Adrenal gland (tissue), 19 donors: ENCODE measurements at regions of chr9 and their contacts with region 1.

Region 1: GRCh38 chr9:134371731-134372130 is 45.5 kb downstream of the RXRA start:
- DNase-seq: peak; percentile 65 to 89 (median 83)
- H3K4me3 ChIP-seq: no peak overlapping the region
- H3K27ac ChIP-seq: peak overlapping the region; percentile 84 to 99 (median 93)
- H3K4me1 ChIP-seq: peaks cover 89 to 92% of the 10 kb centered on the region in 2 donors
- H3K27me3 ChIP-seq: no peaks in the 10 kb centered on the region
- CTCF ChIP-seq: no peak
- POLR2A ChIP-seq: no peak

Region 2: GRCh38 chr9:134283111-134283515 is 88.6 kb before region 1 on chr9:
- intact Hi-C with region 1: no loop called
- DNase-seq: peak in 5 of 7 donors; percentile 36 to 62 (median 42)
- H3K4me3 ChIP-seq: no peak overlapping the region
- H3K27ac ChIP-seq: no peak overlapping the region
- H3K4me1 ChIP-seq: no peaks in the 10 kb centered on the region
- H3K27me3 ChIP-seq: no peaks in the 10 kb centered on the region
- CTCF ChIP-seq: no peak
- POLR2A ChIP-seq: no peak

Region 3: DNA sequence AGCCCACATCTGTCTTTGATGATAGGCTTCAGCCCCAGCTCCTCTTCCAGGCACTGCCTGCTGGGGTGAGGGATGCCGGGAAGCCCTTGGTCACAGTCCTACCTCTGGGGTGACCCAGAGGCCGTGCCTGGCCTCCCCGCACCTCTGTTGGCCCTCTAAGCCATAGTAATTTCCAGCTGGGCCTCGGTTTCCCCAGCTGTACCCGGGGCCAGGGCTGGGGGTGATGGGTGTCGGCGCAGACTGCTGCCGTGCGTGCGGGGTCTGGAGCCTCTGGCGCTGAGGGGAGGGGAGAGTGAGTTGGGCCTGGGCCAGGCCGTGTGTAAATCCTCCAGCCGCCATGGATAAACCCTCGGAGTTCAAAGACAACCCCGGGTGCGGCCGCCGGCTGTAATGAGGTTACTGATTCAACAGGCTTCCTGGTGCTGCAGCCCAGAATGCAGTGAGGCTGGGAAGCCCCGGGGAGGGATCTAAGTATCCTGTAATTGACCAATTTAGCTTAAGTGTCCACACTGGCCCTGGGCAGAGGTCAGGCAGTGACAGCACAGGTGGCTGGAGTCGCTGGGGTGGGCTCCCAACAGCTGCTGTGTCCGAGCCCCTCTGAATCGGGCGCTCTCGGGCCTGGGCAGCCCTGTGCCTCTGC is 38.4 kb before region 1 on chr9:
- intact Hi-C with region 1: loop called (anchors 5 kb)
- DNase-seq: peak in 4 of 7 donors; percentile 60 to 85 (median 68)
- H3K4me3 ChIP-seq: no peak overlapping the region
- H3K27ac ChIP-seq: peak overlapping the region in 4 of 5 donors; percentile 16 to 83 (median 60)
- H3K4me1 ChIP-seq: peaks cover 90 to 100% of the 10 kb centered on the region in 2 donors
- H3K27me3 ChIP-seq: no peaks in the 10 kb centered on the region
- CTCF ChIP-seq: no peak
- POLR2A ChIP-seq: no peak